ENCODE measurements at regions of chr5 and their contacts with region 1.

Region 1: DNA sequence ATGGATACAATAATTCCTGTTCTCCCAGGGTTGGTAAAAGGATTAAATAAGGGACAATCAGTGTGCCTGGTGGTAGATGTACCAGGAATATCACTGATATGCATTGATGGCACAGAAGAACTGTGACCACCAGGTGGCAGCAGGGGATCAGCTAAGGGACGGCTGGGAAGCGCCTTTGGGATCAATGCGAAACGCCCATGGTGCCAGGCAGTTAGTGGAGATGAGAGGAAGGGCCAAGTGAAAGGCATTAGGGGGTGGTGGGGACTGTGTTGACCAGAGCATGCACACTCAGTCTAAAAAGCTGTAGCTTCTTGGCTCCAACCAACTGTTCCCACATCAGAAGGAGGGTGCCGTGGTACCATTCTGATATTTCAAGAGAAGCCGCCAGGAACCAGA is 55.6 kb downstream of the ARHGEF37 start:
- DNase-seq: peak; percentile 89
- H3K4me3 ChIP-seq: no peak overlapping the region
- H3K27ac ChIP-seq: no peak overlapping the region
- H3K4me1 ChIP-seq: no peaks in the 10 kb centered on the region
- H3K27me3 ChIP-seq: no peaks in the 10 kb centered on the region
- CTCF ChIP-seq: peak; percentile 97

Region 2: GRCh38 chr5:149990518-149991376 is 353.9 kb after region 1 on chr5:
- CTCF ChIA-PET with region 1: interaction called, 6 read pairs
- POLR2A ChIA-PET with region 1: no interaction called
- intact Hi-C with region 1: loop called (anchors 1 kb)
- DNase-seq: peak; percentile 90
- H3K4me3 ChIP-seq: no peak overlapping the region
- H3K27ac ChIP-seq: peak overlapping the region; percentile 17
- H3K4me1 ChIP-seq: peaks cover 32% of the 10 kb centered on the region
- H3K27me3 ChIP-seq: no peaks in the 10 kb centered on the region
- CTCF ChIP-seq: peak; percentile 93